B cell (primary cell): ENCODE measurements at regions of chr14 and their contacts with region 1.

Region 1: DNA sequence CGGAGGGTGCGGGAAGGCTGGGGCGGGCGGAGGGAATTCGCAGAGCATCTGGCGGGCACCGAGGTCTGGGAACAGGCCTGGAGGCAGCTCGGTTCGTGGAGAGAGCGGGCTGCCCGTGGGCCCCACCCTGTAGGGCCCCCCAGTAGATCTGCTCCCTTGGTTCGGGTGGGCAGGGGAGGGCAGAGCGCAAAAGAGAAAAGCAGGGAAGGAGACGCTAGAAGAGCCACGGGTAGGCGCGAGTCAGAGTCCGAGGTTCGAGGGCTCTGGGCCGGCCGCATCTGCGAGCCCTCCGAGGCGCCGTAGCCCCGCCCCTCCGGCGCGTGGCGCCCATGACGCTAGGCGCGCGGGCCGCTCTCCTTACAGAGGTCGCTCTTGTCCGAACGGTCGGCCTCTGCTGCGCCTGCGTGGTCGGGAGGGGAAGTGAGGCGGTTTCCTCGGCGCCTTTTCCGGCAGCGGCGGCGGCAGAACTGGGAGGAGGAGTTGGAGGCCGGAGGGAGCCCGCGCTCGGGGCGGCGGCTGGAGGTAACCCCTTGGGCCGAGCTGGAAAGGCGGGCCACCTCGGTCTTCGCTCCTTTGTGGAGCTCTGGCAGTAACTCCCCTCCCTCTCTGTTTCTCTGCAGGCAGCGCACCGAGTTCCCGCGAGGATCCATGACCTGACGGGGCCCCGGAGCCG is at the start of gene ARF6:
- DNase-seq: peak; percentile 98
- ATAC-seq: peak; percentile 87
- H3K4me3 ChIP-seq: peak within 1 kb of the TSS; percentile 74 to 96 (median 89)
- H3K4me3 Mint-ChIP-seq: peak within 1 kb of the TSS; percentile 97
- H3K27ac ChIP-seq: peak within 1 kb of the TSS; percentile 98 to 99
- H3K27ac Mint-ChIP-seq: peak within 1 kb of the TSS; percentile 98
- H3K4me1 ChIP-seq: peaks cover 28 to 35% of the 10 kb centered on the region in 2 donors
- H3K4me1 Mint-ChIP-seq: peaks cover 42% of the 10 kb centered on the region
- H3K27me3 ChIP-seq: no peaks in the 10 kb centered on the region
- H3K27me3 Mint-ChIP-seq: no peaks in the 10 kb centered on the region
- CTCF ChIP-seq: no peak
- total RNA-seq, gene ARF6: 132 and 135 TPM in 2 replicates

Region 2: GRCh38 chr14:49852301-49853157 is 40.2 kb before region 1 on chr14 and contains the start of gene NEMF:
- CTCF ChIA-PET with region 1: interaction called, 15 read pairs
- POLR2A ChIA-PET with region 1: no interaction called
- intact Hi-C with region 1: loop called (anchors 5 kb)
- DNase-seq: peak; percentile 94
- ATAC-seq: peak; percentile 84
- H3K4me3 ChIP-seq: peak within 1 kb of the TSS; percentile 78 to 99 (median 99)
- H3K4me3 Mint-ChIP-seq: peak within 1 kb of the TSS; percentile 98
- H3K27ac ChIP-seq: peak within 1 kb of the TSS; percentile 72 to 88
- H3K27ac Mint-ChIP-seq: peak within 1 kb of the TSS; percentile 98
- H3K4me1 ChIP-seq: peaks cover 20 to 31% of the 10 kb centered on the region in 2 donors
- H3K4me1 Mint-ChIP-seq: peaks cover 44% of the 10 kb centered on the region
- H3K27me3 ChIP-seq: no peaks in the 10 kb centered on the region
- H3K27me3 Mint-ChIP-seq: no peaks in the 10 kb centered on the region
- CTCF ChIP-seq: peak; percentile 86
- total RNA-seq, gene NEMF: 127 and 146 TPM in 2 replicates

Region 3: GRCh38 chr14:49934646-49935045 is 41.9 kb after region 1 on chr14:
- CTCF ChIA-PET with region 1: no interaction called
- POLR2A ChIA-PET with region 1: interaction called, 10 read pairs
- intact Hi-C with region 1: loop called (anchors 5 kb)
- DNase-seq: no peak
- ATAC-seq: no peak
- H3K4me3 ChIP-seq: no peak overlapping the region
- H3K4me3 Mint-ChIP-seq: no peak overlapping the region
- H3K27ac ChIP-seq: no peak overlapping the region
- H3K27ac Mint-ChIP-seq: no peak overlapping the region
- H3K4me1 ChIP-seq: peaks cover 16 to 26% of the 10 kb centered on the region in 2 donors
- H3K4me1 Mint-ChIP-seq: peaks cover 33% of the 10 kb centered on the region
- H3K27me3 ChIP-seq: no peaks in the 10 kb centered on the region
- H3K27me3 Mint-ChIP-seq: no peaks in the 10 kb centered on the region
- CTCF ChIP-seq: no peak

Region 4: GRCh38 chr14:49977126-49977841 is 84.5 kb after region 1 on chr14:
- CTCF ChIA-PET with region 1: interaction called, 13 read pairs
- POLR2A ChIA-PET with region 1: interaction called, 7 read pairs
- intact Hi-C with region 1: loop called (anchors 1 kb)
- DNase-seq: peak; percentile 80
- ATAC-seq: peak; percentile 85
- H3K4me3 ChIP-seq: peak overlapping the region; percentile 26 to 69 (median 48)
- H3K4me3 Mint-ChIP-seq: peak overlapping the region; percentile 83
- H3K27ac ChIP-seq: peak overlapping the region; percentile 84 to 87
- H3K27ac Mint-ChIP-seq: peak overlapping the region; percentile 90
- H3K4me1 ChIP-seq: peaks cover 85 to 88% of the 10 kb centered on the region in 2 donors
- H3K4me1 Mint-ChIP-seq: peaks cover 80% of the 10 kb centered on the region
- H3K27me3 ChIP-seq: no peaks in the 10 kb centered on the region
- H3K27me3 Mint-ChIP-seq: no peaks in the 10 kb centered on the region
- CTCF ChIP-seq: no peak

Region 5: DNA sequence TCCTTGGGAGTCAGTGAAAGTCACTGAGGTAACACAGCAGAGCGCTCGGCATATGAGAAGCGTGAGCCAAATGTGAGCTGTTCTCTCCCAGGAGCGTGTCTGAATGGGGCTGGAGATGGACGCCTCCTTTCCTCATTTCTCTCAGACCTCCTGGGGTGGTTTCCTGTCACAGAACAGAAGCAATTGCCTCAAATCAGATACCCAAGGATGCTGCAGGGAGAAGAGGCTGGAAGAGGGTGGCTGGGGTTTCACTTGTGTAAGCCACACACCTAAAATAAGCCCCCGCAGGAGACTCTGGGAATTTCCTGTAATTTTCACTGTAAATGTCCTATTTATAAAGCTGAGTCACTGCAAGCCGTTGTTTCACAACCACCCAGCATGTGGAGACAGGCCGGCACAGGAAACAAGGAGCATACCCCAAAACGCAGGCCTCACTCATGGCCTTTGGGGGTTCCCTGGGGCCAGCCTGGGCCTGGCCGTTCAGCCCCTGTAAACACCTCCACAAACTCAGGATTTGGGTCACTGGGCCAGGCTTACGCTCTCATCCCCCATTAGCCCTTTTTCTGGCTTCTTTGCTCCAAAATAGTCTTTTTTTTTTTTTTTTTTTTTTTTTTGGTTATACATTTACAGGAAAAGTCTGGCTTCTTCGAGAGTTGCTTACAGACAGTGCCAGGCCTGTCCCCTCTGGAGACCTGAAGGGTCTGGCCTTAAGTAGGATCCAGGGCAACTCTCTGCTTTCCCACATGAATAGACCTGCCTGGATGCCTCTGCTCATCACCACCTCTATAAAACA is 168.3 kb after region 1 on chr14:
- CTCF ChIA-PET with region 1: interaction called, 8 read pairs
- POLR2A ChIA-PET with region 1: interaction called, 10 read pairs
- intact Hi-C with region 1: loop called (anchors 1 kb)
- DNase-seq: peak; percentile 34
- ATAC-seq: no peak
- H3K4me3 ChIP-seq: peak overlapping the region in 3 of 5 experiments; percentile 0 to 9 (median 2)
- H3K4me3 Mint-ChIP-seq: peak overlapping the region; percentile 95
- H3K27ac ChIP-seq: peak overlapping the region; percentile 92 to 96
- H3K27ac Mint-ChIP-seq: peak overlapping the region; percentile 100
- H3K4me1 ChIP-seq: peaks cover 60 to 82% of the 10 kb centered on the region in 2 donors
- H3K4me1 Mint-ChIP-seq: peaks cover 87% of the 10 kb centered on the region
- H3K27me3 ChIP-seq: no peaks in the 10 kb centered on the region
- H3K27me3 Mint-ChIP-seq: no peaks in the 10 kb centered on the region
- CTCF ChIP-seq: no peak

Region 6: DNA sequence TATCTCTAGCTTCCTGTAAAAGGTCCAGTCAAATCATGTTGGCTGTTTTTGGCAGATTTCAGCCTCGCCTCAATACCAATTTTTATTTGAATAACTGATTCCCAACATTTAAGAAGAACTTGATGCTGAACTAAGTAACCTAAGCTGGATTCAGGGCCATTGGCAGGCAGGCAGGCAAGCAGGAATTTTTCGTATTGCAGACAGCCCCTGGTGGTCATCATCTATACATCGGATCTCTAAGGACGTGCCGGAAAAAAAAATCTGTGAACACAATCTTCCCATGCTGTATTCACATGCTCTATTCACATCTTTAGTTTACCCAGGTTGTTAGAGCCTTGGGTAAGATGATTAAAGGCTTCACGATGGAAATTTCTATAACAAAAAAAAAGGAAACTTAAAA is 216.6 kb after region 1 on chr14:
- CTCF ChIA-PET with region 1: interaction called, 12 read pairs
- POLR2A ChIA-PET with region 1: interaction called, 9 read pairs
- intact Hi-C with region 1: loop called (anchors 1 kb)
- DNase-seq: no peak
- ATAC-seq: no peak
- H3K4me3 ChIP-seq: no peak overlapping the region
- H3K4me3 Mint-ChIP-seq: no peak overlapping the region
- H3K27ac ChIP-seq: peak overlapping the region in 1 of 2 donors; percentile 85
- H3K27ac Mint-ChIP-seq: no peak overlapping the region
- H3K4me1 ChIP-seq: peaks cover 28 to 34% of the 10 kb centered on the region in 2 donors
- H3K4me1 Mint-ChIP-seq: peaks cover 40% of the 10 kb centered on the region
- H3K27me3 ChIP-seq: no peaks in the 10 kb centered on the region
- H3K27me3 Mint-ChIP-seq: no peaks in the 10 kb centered on the region
- CTCF ChIP-seq: no peak

Region 7: GRCh38 chr14:51167587-51168214 is 1274.9 kb after region 1 on chr14:
- CTCF ChIA-PET with region 1: no interaction called
- POLR2A ChIA-PET with region 1: no interaction called
- intact Hi-C with region 1: no loop called
- DNase-seq: no peak
- ATAC-seq: no peak
- H3K4me3 ChIP-seq: no peak overlapping the region
- H3K4me3 Mint-ChIP-seq: no peak overlapping the region
- H3K27ac ChIP-seq: no peak overlapping the region
- H3K27ac Mint-ChIP-seq: no peak overlapping the region
- H3K4me1 ChIP-seq: no peaks in the 10 kb centered on the region
- H3K4me1 Mint-ChIP-seq: no peaks in the 10 kb centered on the region
- H3K27me3 ChIP-seq: no peaks in the 10 kb centered on the region
- H3K27me3 Mint-ChIP-seq: no peaks in the 10 kb centered on the region
- CTCF ChIP-seq: no peak